ENCODE measurements at regions of chr2 and their contacts with region 1.

Region 1: DNA sequence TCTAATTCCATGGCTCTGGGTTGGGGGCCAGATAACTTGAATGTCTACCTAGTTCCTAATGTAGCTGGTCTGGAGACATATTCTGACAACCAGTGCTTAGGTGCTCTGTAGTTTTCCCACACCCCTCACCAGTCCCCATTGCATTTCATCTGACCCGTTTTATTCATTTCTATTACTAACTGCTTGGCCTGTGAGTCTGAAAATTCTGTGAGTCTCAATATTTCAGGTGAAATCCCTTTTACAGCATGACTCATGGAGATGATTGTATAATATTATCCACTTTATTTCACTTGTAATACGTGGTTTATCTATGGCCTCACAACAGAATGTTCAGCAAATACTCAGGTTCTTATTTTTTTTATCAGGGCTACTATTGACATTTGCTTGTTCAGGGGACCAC is 103.7 kb upstream of the UGP2 start:
- DNase-seq: no peak
- H3K4me3 Mint-ChIP-seq: no peak overlapping the region
- H3K27ac Mint-ChIP-seq: no peak overlapping the region
- H3K4me1 Mint-ChIP-seq: peaks cover 4% of the 10 kb centered on the region
- H3K27me3 Mint-ChIP-seq: no peaks in the 10 kb centered on the region

Region 2: GRCh38 chr2:63581298-63581961 is 156.6 kb before region 1 on chr2:
- CTCF ChIA-PET with region 1: no interaction called
- intact Hi-C with region 1: no loop called
- DNase-seq: no peak
- H3K4me3 Mint-ChIP-seq: no peak overlapping the region
- H3K27ac Mint-ChIP-seq: no peak overlapping the region
- H3K4me1 Mint-ChIP-seq: peaks cover 5% of the 10 kb centered on the region
- H3K27me3 Mint-ChIP-seq: no peaks in the 10 kb centered on the region

Region 3: GRCh38 chr2:63698825-63699548 is 39.0 kb before region 1 on chr2:
- CTCF ChIA-PET with region 1: interaction called, 4 read pairs
- intact Hi-C with region 1: loop called (anchors 2 kb)
- DNase-seq: peak; percentile 22
- H3K4me3 Mint-ChIP-seq: no peak overlapping the region
- H3K27ac Mint-ChIP-seq: no peak overlapping the region
- H3K4me1 Mint-ChIP-seq: no peaks in the 10 kb centered on the region
- H3K27me3 Mint-ChIP-seq: no peaks in the 10 kb centered on the region

Region 4: GRCh38 chr2:63723709-63724108 is 14.3 kb before region 1 on chr2:
- CTCF ChIA-PET with region 1: no interaction called
- intact Hi-C with region 1: no loop called
- DNase-seq: no peak
- H3K4me3 Mint-ChIP-seq: no peak overlapping the region
- H3K27ac Mint-ChIP-seq: no peak overlapping the region
- H3K4me1 Mint-ChIP-seq: no peaks in the 10 kb centered on the region
- H3K27me3 Mint-ChIP-seq: no peaks in the 10 kb centered on the region